Calu3 (cell line): ENCODE measurements at regions of chr14 and their contacts with region 1.

Region 1: GRCh38 chr14:99737451-99737951 is 53.4 kb downstream of the CYP46A1 start:
- DNase-seq: peak; percentile 73
- H3K4me3 Mint-ChIP-seq: peak overlapping the region; percentile 76
- H3K27ac Mint-ChIP-seq: no peak overlapping the region
- H3K4me1 Mint-ChIP-seq: peaks cover 20% of the 10 kb centered on the region
- H3K27me3 Mint-ChIP-seq: peaks cover 18% of the 10 kb centered on the region
- CTCF ChIP-seq: no peak

Region 2: DNA sequence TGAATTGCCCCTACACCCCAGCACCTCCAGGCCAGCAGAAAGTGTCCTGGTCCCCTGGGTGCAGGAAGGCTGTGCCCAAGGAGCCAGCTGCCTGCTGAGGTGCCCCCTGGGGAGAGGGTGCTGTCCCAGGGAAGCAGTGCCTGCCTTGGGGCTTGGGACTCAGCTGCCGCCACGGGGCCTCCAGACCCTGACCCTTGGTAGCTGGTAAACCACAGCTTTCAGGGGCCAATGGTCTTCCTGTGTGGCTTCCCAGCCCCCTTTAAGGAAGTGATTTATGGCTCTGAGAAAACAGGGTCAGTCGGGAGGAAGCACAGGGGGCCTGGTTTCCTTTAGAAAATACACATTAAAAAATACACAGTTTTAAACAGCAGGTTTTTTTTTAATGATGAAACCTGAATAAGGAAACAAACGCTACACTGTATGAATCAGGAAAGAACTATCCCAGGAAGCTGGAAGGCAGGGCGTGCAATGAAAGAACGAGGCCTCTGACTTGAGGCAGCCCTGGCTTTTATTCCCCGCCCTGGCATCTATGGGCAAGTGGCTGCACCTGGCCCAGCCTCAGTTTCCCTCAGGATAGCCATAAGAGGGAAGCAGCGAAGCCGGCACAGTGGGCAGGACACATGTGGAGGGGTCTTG is 15.1 kb after region 1 on chr14:
- CTCF ChIA-PET with region 1: interaction called, 10 read pairs
- intact Hi-C with region 1: no loop called
- DNase-seq: peak; percentile 60
- H3K4me3 Mint-ChIP-seq: no peak overlapping the region
- H3K27ac Mint-ChIP-seq: peak overlapping the region; percentile 36
- H3K4me1 Mint-ChIP-seq: peaks cover 60% of the 10 kb centered on the region
- H3K27me3 Mint-ChIP-seq: no peaks in the 10 kb centered on the region
- CTCF ChIP-seq: no peak

Region 3: GRCh38 chr14:99793213-99794150 is 56.0 kb after region 1 on chr14 and contains the start of gene EML1:
- CTCF ChIA-PET with region 1: no interaction called
- intact Hi-C with region 1: loop called (anchors 5 kb)
- DNase-seq: peak; percentile 87
- H3K4me3 Mint-ChIP-seq: no peak within 1 kb of the TSS
- H3K27ac Mint-ChIP-seq: no peak within 1 kb of the TSS
- H3K4me1 Mint-ChIP-seq: peaks cover 11% of the 10 kb centered on the region
- H3K27me3 Mint-ChIP-seq: no peaks in the 10 kb centered on the region
- CTCF ChIP-seq: no peak
- total RNA-seq, gene EML1: 2.5 and 4.7 TPM in 2 replicates